Endothelial cell of umbilical vein (primary cell): ENCODE measurements at regions of chr1 and their contacts with region 1.

Region 1: DNA sequence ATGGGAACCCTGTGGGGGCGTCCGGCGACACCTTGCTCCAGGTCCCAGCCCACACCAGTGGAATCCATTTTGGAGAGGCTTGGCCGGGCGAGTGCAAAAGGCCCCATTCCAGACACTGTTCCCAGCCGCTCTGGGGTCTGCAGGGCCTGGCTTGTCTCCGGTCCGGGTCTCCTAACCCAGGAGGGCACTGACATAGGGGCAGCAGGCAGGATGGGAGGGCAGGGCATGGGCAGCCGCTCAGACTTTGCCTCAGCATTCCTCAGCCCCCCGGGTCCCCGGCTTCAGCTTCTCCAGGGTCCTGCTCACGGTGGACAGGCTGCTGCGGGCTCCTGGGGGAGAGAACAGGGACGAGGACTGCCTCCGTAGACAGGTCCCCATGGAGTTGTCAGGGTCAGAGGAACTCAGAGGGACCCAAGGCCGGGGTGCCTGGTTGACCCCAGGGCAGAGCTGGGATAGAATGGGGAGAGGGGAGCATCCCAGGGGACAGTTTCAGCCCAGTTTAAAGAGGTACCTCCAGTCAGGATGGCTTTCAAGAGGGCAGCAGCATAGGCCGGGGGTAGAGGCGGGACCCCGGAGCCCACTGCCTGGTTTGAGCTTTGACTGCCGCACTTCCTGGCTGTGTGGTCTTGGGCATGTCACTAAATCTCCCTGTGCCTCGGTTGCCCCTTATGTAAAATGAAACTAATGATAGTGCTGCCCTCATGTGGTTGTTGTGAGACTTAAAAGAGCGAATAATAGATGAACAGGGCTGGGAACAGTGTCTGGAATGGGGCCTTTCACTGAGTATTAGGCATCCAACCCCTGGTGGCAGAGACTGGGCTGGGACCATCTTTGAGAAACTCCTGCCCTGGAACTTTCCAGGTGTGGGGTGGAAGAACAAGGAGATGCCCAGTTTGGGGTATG is 3.7 kb downstream of the KNCN start:
- DNase-seq: peak; percentile 48
- H3K4me3 ChIP-seq: no peak overlapping the region
- H3K27ac ChIP-seq: no peak overlapping the region
- H3K4me1 ChIP-seq: no peaks in the 10 kb centered on the region
- H3K27me3 ChIP-seq: peaks cover 45 to 46% of the 10 kb centered on the region in 2 experiments
- CTCF ChIP-seq: peak; percentile 36
- POLR2A ChIP-seq: no peak

Region 2: DNA sequence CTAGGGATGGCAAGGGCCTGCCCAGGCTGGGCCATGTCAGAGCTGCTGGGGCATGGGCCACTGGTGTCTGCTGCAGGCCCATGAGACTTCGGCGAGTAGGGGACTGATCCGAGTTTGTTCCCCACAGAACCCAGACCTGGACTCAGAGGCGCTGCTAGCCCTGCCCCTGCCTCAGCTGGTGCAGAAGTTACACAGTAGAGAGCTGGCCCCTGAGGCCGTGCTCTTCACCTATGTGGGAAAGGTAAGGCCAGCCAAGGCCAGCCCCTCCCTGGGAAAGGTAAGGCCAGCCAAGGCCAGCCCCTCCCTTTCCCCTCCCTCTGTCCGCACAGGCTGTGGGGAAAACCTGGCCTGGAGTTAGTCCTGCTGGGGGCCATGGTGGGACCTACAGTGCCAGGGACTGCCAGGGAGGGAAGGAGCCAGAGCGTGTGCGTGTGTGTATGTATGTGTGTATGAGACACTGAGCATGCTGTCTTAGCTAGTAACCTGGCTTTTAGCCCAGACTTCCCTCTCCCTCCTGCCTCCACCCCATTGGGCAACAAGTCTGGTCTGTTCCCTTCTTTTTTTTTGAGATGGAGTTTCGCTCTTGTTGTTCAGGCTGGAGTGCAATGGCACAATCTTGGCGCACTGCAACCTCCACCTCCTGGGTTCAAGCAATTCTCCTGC is 145.6 kb before region 1 on chr1:
- CTCF ChIA-PET with region 1: interaction called, 4 read pairs
- POLR2A ChIA-PET with region 1: no interaction called
- dilution Hi-C with region 1: no loop called
- intact Hi-C with region 1: loop called (anchors 1 kb)
- DNase-seq: peak; percentile 33
- H3K4me3 ChIP-seq: no peak overlapping the region
- H3K27ac ChIP-seq: no peak overlapping the region
- H3K4me1 ChIP-seq: no peaks in the 10 kb centered on the region
- H3K27me3 ChIP-seq: peaks cover 0 to 2% of the 10 kb centered on the region in 2 experiments
- CTCF ChIP-seq: no peak
- POLR2A ChIP-seq: no peak

Region 3: GRCh38 chr1:46477153-46477929 is 70.4 kb before region 1 on chr1:
- CTCF ChIA-PET with region 1: interaction called, 3 read pairs
- POLR2A ChIA-PET with region 1: no interaction called
- dilution Hi-C with region 1: no loop called
- intact Hi-C with region 1: loop called (anchors 1 kb)
- DNase-seq: peak; percentile 63
- H3K4me3 ChIP-seq: no peak overlapping the region
- H3K27ac ChIP-seq: no peak overlapping the region
- H3K4me1 ChIP-seq: no peaks in the 10 kb centered on the region
- H3K27me3 ChIP-seq: peaks cover 36 to 39% of the 10 kb centered on the region in 2 experiments
- CTCF ChIP-seq: peak; percentile 81 to 90
- POLR2A ChIP-seq: no peak